ENCODE measurements at regions of chr1 and their contacts with region 1.

Region 1: DNA sequence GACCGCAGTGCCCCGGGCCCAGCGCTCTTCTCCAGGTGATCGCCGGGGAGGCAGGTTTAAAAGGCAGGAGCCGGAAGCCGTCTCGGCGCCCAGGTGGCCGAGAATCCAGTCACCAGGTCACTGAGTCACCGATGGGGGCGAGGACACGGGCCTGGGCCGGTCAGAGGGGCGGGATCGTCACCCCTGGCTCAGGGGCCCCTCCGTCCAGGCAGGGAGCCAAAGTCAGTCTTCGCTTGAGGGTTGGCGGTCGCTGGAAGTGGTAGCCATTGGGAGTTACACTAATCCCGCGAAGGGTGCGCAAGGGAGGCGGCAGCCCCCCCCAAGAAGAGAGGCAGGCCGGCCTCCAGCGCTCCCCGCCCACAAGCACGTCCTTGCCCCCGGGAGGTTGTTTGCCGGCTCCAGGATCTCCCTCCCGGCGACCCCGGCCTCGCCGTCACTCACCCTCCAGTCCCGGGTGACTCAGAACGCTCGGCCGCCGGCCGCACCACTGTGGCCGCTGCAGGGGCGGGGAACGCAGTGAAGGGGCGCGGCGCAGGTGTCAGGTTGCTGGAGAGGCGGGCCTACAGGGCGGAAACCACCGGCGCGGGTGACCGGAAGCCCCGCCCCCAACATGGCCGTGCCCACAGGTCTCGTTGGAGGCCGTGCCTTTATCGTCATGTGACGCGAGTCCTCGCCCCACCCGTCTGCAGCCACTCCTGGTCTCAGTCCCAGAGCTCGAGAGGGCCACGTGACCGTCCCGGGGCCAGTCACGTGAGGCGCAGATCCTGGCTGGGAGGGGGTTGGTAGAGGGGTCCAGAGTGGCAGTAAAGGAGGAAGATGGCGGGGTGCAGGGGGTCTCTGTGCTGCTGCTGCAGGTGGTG is at the starts of genes CLCN6 and MTHFR:
- DNase-seq: peak; percentile 100
- H3K4me3 ChIP-seq: peak within 1 kb of the TSS; percentile 77 to 90 (median 80)
- H3K27ac ChIP-seq: peak within 1 kb of the TSS; percentile 95 to 99 (median 97)
- H3K4me1 ChIP-seq: peaks cover 0 to 61% (median 60%) of the 10 kb centered on the region in 4 donors
- H3K27me3 ChIP-seq: no peaks in the 10 kb centered on the region
- CTCF ChIP-seq: no peak
- EP300 ChIP-seq: peak in 2 of 4 donors; percentile 34 to 96
- POLR2A ChIP-seq: peak; percentile 92 to 98
- total RNA-seq, gene CLCN6: 12.1 to 19.7 (median 16.1) TPM
- total RNA-seq, gene MTHFR: 16.8 to 38.3 (median 27.9) TPM

Region 2: DNA sequence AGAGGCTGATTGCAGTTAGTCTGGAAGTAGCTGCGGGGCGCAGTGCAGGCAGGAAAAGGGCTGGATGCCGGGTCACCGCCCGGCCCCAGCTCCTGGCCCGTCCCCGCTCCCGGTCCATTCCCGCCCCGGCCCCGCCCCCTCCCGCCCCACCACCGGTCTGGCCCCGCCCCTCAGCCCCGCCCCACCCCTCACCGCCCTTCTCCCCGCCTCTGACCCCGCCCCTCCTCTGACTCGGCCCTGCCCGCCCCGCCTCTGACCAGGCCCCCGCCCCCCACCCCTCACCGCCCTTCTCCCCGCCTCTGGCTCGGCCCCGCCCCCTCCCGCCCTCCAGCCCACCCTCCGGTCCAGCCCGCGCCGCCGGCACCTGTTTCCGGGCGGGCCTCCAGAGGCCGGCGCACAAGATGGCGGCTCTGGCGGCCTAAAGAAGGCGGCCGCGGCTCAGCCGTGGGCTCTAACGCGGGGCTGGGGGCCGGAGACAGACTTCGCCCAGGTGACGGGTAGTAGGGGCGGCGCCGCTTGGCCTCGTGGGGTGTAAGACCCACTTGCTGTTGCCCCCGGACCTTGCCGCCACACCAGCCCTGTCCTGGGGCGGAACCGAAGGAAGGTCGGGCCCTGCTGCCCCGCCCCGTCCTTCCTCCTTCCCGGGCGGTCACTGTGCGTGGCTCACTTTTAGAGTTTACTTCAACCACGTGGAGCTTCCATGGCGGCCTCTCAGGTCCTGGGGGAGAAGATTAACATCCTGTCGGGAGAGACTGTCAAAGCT is 532.7 kb before region 1 on chr1 and contains the start of gene UBIAD1:
- intact Hi-C with region 1: loop called (anchors 10 kb)
- DNase-seq: peak; percentile 94
- H3K4me3 ChIP-seq: peak within 1 kb of the TSS; percentile 71 to 89 (median 84)
- H3K27ac ChIP-seq: peak within 1 kb of the TSS; percentile 92 to 95 (median 94)
- H3K4me1 ChIP-seq: peaks cover 0 to 35% (median 27%) of the 10 kb centered on the region in 4 donors
- H3K27me3 ChIP-seq: no peaks in the 10 kb centered on the region
- CTCF ChIP-seq: no peak
- EP300 ChIP-seq: no peak
- POLR2A ChIP-seq: peak in 1 of 2 donors; percentile 33
- total RNA-seq, gene UBIAD1: 8.2 to 13.6 (median 11.2) TPM

Region 3: GRCh38 chr1:11550664-11551283 is 254.9 kb before region 1 on chr1:
- intact Hi-C with region 1: no loop called
- DNase-seq: no peak
- H3K4me3 ChIP-seq: no peak overlapping the region
- H3K27ac ChIP-seq: no peak overlapping the region
- H3K4me1 ChIP-seq: no peaks in the 10 kb centered on the region
- H3K27me3 ChIP-seq: peaks cover 0 to 23% (median 10%) of the 10 kb centered on the region in 3 donors
- CTCF ChIP-seq: no peak
- EP300 ChIP-seq: no peak
- POLR2A ChIP-seq: no peak

Region 4: GRCh38 chr1:11790880-11791715 is 14.6 kb before region 1 on chr1:
- intact Hi-C with region 1: loop called (anchors 1 kb)
- DNase-seq: peak; percentile 97
- H3K4me3 ChIP-seq: no peak overlapping the region
- H3K27ac ChIP-seq: peak overlapping the region; percentile 86 to 93 (median 88)
- H3K4me1 ChIP-seq: peaks cover 0 to 57% (median 54%) of the 10 kb centered on the region in 4 donors
- H3K27me3 ChIP-seq: no peaks in the 10 kb centered on the region
- CTCF ChIP-seq: no peak
- EP300 ChIP-seq: peak; percentile 74 to 98 (median 93)
- POLR2A ChIP-seq: no peak

Region 5: DNA sequence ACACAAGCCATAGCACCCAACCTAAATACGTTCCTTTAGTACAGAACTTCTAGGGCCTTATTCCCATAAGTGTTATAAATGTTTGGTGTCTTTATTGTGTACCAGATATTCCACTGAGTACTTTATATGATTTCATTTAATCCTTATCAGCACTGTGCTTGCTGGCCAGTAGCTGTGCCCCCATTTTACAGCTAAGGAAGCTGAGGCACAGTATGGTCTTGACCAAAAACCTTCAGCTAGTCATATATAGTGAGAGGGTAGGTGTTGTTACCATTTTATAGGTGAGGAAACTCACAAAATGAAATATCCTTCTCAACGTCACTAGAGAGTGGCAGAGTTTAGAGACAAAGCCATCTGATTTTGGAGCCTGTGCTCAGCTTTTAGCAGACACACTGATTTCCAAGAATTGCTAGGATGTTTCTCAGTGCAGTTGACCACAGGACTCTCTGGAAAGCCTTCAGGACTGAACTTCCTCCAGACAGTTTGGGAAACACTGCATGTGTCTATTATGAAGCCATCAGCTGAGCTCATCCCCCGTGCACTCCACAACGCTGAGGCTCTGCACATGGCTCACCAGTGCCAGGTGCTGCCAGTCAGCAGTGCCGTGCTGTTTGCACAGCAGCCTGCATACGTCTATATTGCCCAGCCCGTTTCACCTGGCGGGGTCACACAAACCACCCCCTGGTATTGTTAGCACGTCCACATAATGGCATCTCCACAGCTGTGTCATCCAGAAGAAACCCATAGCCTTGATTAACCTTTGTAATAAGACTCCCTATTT is 26.5 kb after region 1 on chr1:
- intact Hi-C with region 1: no loop called
- DNase-seq: peak; percentile 55
- H3K4me3 ChIP-seq: no peak overlapping the region
- H3K27ac ChIP-seq: no peak overlapping the region
- H3K4me1 ChIP-seq: no peaks in the 10 kb centered on the region
- H3K27me3 ChIP-seq: no peaks in the 10 kb centered on the region
- CTCF ChIP-seq: no peak
- EP300 ChIP-seq: no peak
- POLR2A ChIP-seq: no peak